ENCODE measurements at regions of chr17 and their contacts with region 1.

Region 1: GRCh38 chr17:76072148-76072858 is at the start of gene SRP68:
- DNase-seq: peak; percentile 90
- ATAC-seq: peak; percentile 79
- H3K4me3 Mint-ChIP-seq: peak within 1 kb of the TSS; percentile 94
- H3K27ac Mint-ChIP-seq: peak within 1 kb of the TSS; percentile 100
- H3K4me1 Mint-ChIP-seq: peaks cover 44% of the 10 kb centered on the region
- H3K27me3 Mint-ChIP-seq: peaks cover 28% of the 10 kb centered on the region
- total RNA-seq, gene SRP68: 151 to 174 TPM

Region 2: GRCh38 chr17:75779231-75779986 is 292.9 kb before region 1 on chr17:
- CTCF ChIA-PET with region 1: no interaction called
- POLR2A ChIA-PET with region 1: interaction called, 4 read pairs
- intact Hi-C with region 1: loop called in 1 of 2 experiments (anchors 5 kb)
- DNase-seq: peak; percentile 96
- ATAC-seq: peak; percentile 69
- H3K4me3 Mint-ChIP-seq: peak overlapping the region; percentile 98
- H3K27ac Mint-ChIP-seq: peak overlapping the region; percentile 99
- H3K4me1 Mint-ChIP-seq: peaks cover 46% of the 10 kb centered on the region
- H3K27me3 Mint-ChIP-seq: peaks cover 1% of the 10 kb centered on the region

Region 3: GRCh38 chr17:75996665-75997590 is 75.4 kb before region 1 on chr17:
- CTCF ChIA-PET with region 1: no interaction called
- POLR2A ChIA-PET with region 1: no interaction called
- intact Hi-C with region 1: no loop called
- DNase-seq: peak; percentile 63
- ATAC-seq: peak; percentile 71
- H3K4me3 Mint-ChIP-seq: peak overlapping the region; percentile 34
- H3K27ac Mint-ChIP-seq: peak overlapping the region; percentile 87
- H3K4me1 Mint-ChIP-seq: peaks cover 14% of the 10 kb centered on the region
- H3K27me3 Mint-ChIP-seq: no peaks in the 10 kb centered on the region

Region 4: DNA sequence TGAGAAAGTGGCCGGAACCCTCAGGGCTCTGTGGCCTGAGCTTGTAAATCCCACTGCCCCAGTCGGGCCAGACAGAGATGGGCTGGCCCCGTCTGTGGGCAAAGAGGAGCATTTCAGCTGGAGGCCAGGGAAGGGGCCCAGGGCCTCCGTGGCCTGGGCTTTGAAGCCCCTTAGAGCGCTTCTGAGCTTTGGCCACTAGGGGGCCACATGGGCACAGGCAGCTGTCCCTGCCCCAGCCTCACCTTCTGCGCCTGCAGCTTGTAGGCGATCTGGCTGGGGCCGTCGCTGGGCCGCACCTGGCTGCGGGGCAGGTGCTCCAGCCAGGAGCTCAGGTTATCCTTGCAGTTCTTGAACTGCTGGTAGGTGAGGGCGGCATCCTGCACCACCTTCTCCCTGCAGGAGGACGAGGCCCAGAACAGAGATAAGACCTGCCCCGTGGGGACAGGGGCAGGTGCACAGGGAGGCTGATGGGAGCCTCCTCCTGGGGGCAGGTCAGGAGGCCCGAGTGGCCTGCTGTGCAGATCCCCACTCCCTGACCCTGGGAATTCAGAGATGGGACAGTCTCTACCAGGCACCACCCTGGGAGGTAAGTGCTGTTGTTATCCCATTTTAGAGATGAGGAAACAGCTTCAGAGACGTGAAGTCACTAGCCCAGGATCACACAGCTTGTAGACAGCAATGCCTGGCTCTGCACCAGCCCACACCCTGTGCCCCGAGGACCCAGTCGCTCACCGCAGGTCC is 57.9 kb before region 1 on chr17:
- CTCF ChIA-PET with region 1: interaction called, 5 read pairs
- POLR2A ChIA-PET with region 1: no interaction called
- intact Hi-C with region 1: loop called in 1 of 2 experiments (anchors 5 kb)
- DNase-seq: peak; percentile 90
- ATAC-seq: peak; percentile 99
- H3K4me3 Mint-ChIP-seq: no peak overlapping the region
- H3K27ac Mint-ChIP-seq: no peak overlapping the region
- H3K4me1 Mint-ChIP-seq: peaks cover 3% of the 10 kb centered on the region
- H3K27me3 Mint-ChIP-seq: no peaks in the 10 kb centered on the region

Region 5: GRCh38 chr17:76141212-76142038 is 69.1 kb after region 1 on chr17 and contains the start of gene FOXJ1:
- CTCF ChIA-PET with region 1: no interaction called
- POLR2A ChIA-PET with region 1: no interaction called
- intact Hi-C with region 1: loop called in 1 of 2 experiments (anchors 1 kb)
- DNase-seq: peak; percentile 93
- ATAC-seq: peak; percentile 80
- H3K4me3 Mint-ChIP-seq: peak within 1 kb of the TSS; percentile 64
- H3K27ac Mint-ChIP-seq: no peak within 1 kb of the TSS
- H3K4me1 Mint-ChIP-seq: peaks cover 51% of the 10 kb centered on the region
- H3K27me3 Mint-ChIP-seq: peaks cover 9% of the 10 kb centered on the region
- total RNA-seq, gene FOXJ1: 0.47 to 0.53 TPM

Region 6: GRCh38 chr17:76271669-76272540 is 199.6 kb after region 1 on chr17:
- CTCF ChIA-PET with region 1: no interaction called
- POLR2A ChIA-PET with region 1: interaction called, 9 read pairs
- intact Hi-C with region 1: loop called in 1 of 2 experiments (anchors 1 kb)
- DNase-seq: peak; percentile 95
- ATAC-seq: peak; percentile 57
- H3K4me3 Mint-ChIP-seq: peak overlapping the region; percentile 96
- H3K27ac Mint-ChIP-seq: peak overlapping the region; percentile 98
- H3K4me1 Mint-ChIP-seq: peaks cover 70% of the 10 kb centered on the region
- H3K27me3 Mint-ChIP-seq: no peaks in the 10 kb centered on the region

Region 7: DNA sequence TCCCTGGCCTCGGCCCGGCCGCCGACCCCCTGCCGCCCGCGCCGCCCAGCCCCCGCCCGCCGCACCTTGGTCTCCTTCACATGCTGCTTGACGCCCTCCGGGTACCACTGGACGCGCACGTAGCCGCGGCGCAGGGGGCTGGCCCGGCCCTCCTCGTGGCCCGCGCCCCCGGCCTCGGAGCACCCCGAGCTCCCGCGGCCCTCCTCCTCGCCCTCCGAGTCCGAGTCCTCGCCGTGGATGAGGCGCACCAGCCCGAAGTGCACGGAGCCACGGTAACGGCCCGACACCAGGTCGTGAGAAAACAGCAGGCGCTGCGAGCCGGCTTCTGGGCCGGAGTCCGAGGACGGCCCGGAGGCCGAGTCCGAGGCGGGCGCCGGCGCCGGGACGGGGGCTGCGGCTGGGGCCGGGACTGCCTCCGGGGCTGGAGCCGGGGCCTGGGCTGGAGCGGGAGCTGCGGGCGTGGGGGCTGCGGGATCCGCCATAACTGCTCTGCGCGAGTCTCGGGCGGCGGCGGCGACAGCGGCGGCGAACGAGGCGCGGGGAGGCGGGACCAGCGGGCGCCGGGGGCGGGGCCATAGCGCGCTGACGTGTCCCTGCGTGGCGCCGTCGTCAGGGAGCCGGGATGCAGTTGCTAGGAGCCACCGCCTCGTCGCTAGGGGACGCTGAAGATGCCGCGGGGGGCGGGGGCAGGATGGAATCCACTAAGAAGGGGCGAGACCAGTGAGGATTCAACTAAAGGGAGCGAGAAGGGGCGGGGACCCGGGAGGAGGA is 380.5 kb after region 1 on chr17 and contains the start of gene UBE2O:
- CTCF ChIA-PET with region 1: no interaction called
- POLR2A ChIA-PET with region 1: no interaction called
- intact Hi-C with region 1: loop called in 1 of 2 experiments (anchors 2 kb)
- DNase-seq: peak; percentile 96
- ATAC-seq: peak; percentile 96
- H3K4me3 Mint-ChIP-seq: peak within 1 kb of the TSS; percentile 84
- H3K27ac Mint-ChIP-seq: peak within 1 kb of the TSS; percentile 55
- H3K4me1 Mint-ChIP-seq: peaks cover 36% of the 10 kb centered on the region
- H3K27me3 Mint-ChIP-seq: no peaks in the 10 kb centered on the region
- total RNA-seq, gene UBE2O: 28.1 to 30.7 TPM